Thyroid gland (tissue), 4 donors: ENCODE measurements at regions of chr3 and their contacts with region 1.

Region 1: DNA sequence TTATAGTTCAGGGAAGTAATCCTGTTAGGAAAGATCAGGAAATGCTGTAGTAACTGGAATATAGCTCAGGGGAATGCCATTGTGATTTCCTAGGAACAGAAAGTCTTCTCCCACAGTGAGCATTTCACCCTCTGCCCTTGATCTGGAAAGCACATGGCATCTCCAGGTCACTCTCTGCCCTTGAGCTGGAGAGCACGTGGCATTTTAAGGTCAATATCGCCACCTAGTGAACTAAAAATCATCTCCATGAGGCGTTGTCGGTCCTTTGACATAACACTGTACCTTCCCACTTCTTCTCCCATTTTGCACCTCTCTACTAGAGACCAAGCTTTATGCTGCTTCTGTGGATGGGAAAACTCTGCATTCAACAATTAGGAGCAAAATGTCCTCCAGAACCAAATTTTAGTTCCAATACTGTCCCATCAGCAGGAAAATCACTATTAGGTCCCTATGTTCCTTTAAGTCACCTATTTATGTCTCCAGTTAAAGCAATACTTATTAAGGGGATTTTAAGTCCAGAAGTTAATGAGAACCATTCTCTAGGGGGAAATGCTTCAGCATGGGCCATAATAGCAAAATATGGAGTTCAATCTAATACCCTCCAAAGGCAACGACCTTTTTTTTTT is 54.7 kb upstream of the GK5 start:
- DNase-seq: peak; percentile 48 to 54
- H3K4me3 ChIP-seq: no peak overlapping the region
- H3K27ac ChIP-seq: no peak overlapping the region
- H3K4me1 ChIP-seq: peaks cover 9 to 18% of the 10 kb centered on the region in 2 donors
- H3K27me3 ChIP-seq: no peaks in the 10 kb centered on the region
- CTCF ChIP-seq: peak; percentile 13 to 89 (median 66)
- POLR2A ChIP-seq: no peak

Region 2: GRCh38 chr3:141255846-141256261 is 1024.2 kb before region 1 on chr3:
- intact Hi-C with region 1: no loop called
- DNase-seq: no peak
- H3K4me3 ChIP-seq: no peak overlapping the region
- H3K27ac ChIP-seq: no peak overlapping the region
- H3K4me1 ChIP-seq: no peaks in the 10 kb centered on the region
- H3K27me3 ChIP-seq: no peaks in the 10 kb centered on the region
- CTCF ChIP-seq: no peak
- POLR2A ChIP-seq: no peak

Region 3: DNA sequence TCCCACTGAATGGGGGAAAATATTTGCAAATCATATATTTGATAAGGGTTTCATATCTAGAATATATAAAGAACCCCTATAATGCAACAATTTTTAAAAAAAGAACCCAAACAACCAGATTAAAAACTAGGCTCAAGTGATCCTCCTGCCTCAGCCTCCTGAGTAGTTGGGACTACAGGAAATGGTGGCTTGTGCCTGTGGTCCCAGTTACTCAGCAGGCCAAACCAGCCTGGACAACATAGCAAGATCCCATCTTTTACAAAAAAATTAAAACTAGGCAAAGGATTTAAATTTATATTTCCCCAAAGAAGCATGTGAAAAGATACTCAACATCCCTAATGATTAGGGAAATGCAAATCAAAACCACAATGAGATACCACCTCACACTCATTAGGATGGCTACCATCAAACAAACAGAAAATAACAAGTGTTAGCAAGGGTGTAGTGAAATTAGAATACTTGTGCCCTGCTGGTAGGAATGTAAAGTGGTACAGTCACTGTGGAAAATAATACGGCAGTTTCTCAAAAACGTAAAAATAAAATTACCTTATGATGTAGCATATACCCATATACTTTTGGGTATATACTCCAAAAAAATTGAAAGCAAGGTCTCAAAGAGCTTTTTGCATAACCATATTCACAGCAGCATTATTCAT is 150.4 kb before region 1 on chr3:
- intact Hi-C with region 1: loop called (anchors 5 kb)
- DNase-seq: no peak
- H3K4me3 ChIP-seq: no peak overlapping the region
- H3K27ac ChIP-seq: no peak overlapping the region
- H3K4me1 ChIP-seq: no peaks in the 10 kb centered on the region
- H3K27me3 ChIP-seq: no peaks in the 10 kb centered on the region
- CTCF ChIP-seq: no peak
- POLR2A ChIP-seq: no peak

Region 4: GRCh38 chr3:142180761-142181362 is 99.2 kb before region 1 on chr3:
- intact Hi-C with region 1: loop called (anchors 10 kb)
- DNase-seq: peak; percentile 34 to 45
- H3K4me3 ChIP-seq: no peak overlapping the region
- H3K27ac ChIP-seq: no peak overlapping the region
- H3K4me1 ChIP-seq: no peaks in the 10 kb centered on the region
- H3K27me3 ChIP-seq: no peaks in the 10 kb centered on the region
- CTCF ChIP-seq: peak; percentile 11 to 53 (median 41)
- POLR2A ChIP-seq: no peak